Prostate gland (tissue), 2 donors: ENCODE measurements at regions of chr12 and their contacts with region 1.

Region 1: DNA sequence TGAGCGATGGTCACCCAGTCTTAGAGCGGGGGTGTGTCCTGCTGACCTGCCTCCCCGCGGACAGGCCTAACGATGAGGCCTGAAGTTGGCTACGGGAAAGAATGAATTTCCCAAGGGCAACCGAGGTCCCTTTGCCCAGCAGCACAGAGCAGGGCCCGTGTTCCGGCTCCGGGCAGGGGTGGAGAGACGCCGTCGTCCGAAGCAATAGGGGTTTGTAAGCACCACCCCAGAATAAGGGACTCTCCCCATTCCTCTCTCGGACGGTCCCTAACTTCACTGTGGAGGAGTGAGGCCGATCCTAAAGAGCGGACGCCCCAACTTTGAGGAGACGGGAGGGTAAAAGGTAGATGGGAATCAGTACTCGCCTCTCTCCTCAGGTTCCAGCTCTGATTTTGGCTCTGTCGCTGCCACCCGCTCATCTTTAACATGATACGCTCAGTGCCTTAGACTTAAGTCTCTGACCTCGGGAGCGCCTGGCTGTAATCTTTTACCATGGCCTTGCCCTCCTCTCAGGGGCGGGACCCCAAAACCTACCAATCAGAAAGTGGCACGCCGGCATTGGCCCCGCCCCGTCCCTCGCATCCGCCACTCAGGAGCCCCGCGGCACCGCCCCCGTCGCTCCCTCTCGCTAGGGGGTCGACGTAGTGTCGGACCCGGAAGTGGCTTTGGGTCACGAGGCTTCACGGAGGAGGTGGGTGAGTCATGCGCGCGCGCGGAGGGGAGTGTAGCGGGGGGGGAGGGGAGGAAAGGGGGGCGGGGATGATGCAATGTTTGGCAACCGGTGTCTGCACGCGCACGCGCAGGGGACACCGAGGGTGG is at the start of gene DDIT3:
- DNase-seq: peak; percentile 99
- H3K4me3 ChIP-seq: peak within 1 kb of the TSS; percentile 83 to 87
- H3K27ac ChIP-seq: peak within 1 kb of the TSS; percentile 99
- H3K4me1 ChIP-seq: peaks cover 25% of the 10 kb centered on the region
- H3K27me3 ChIP-seq: no peaks in the 10 kb centered on the region
- CTCF ChIP-seq: peak in 2 of 4 experiments; percentile 25 to 31
- POLR2A ChIP-seq: peak; percentile 100
- total RNA-seq, gene DDIT3: 39.0 to 51.8 TPM

Region 2: DNA sequence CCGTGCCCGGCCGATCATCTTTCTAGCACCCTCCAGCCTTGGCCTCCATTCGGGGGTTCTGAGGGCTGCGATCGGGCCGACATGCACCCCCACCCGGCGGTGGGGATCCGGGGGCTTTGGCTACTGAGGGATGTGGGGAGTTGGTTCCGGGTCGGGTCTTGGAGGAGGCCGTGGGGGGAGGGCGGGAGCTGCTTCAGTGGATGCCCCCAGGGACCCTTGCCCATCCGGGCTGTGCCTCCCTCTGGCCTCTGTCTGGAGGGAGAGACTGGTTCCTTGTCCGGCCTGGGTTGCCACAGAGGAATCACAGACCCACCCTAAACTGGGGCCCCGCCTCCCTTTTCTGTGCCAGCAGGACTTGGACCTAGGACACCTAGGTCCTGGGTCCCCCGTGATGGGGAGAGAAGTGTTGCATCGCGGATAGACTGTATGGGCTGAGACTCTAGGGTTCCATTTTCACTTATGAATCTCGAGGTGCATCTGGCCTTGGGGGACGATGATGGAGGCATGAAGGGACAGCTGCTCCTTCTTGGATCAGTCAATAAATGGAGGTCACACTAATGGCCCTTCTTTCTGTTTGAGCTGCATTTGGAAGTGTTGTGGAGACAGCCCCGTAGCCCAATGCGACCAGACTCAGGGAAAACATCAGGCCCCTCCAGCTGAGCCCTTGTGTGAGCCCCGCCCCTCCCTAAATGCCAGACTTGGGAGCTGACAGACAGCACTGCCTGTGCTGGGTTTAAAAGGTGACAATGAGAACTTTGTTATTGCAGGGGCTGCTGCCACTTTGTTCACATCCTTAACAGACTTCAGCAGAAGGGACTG is 84.9 kb after region 1 on chr12:
- intact Hi-C with region 1: loop called (anchors 5 kb)
- DNase-seq: no peak
- H3K4me3 ChIP-seq: peak overlapping the region; percentile 84 to 89
- H3K27ac ChIP-seq: peak overlapping the region; percentile 92 to 96
- H3K4me1 ChIP-seq: no peaks in the 10 kb centered on the region
- H3K27me3 ChIP-seq: no peaks in the 10 kb centered on the region
- CTCF ChIP-seq: no peak
- POLR2A ChIP-seq: no peak